Activated naive CD4-positive, alpha-beta T cell treated with anti-CD3 and anti-CD28 coated beads, Interleukin-2, amount 10 ng/mL, durations not matched to agents 7 days and 5 days (primary cell): ENCODE measurements at regions of chr17 and their contacts with region 1.

Region 1: DNA sequence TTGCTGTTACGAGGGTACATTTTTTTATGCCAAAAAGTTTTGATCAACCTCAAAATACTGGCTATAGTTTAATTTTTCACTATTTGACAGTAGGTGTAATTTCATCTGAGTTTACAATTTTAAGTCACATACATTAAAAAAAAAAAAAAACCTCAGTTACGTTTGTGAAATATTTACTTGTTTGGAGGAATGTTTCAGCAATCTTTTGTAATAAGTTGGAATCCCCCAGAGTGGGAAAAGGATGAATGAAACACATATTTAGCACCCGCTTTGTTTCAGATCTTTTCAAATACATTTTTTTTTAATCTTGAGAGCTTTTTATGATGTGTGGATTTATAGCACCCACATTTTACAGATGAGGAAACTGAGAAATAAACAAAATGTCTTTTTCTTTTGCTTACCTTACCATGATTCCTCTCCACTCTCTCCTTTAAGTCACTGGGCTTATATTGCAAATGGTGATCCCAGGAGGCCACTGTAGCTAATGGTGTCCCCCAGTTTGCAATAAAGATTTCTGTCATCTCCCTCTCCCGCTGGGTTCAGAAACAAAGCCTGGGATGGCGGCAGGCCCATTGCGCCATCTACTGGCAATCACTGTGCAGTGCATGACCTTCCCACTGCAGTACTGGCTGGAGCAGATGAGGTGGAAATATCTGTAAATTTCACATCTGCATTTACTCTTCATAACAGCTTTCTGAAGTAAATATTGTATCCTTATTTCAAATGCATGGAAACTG is 27.7 kb downstream of the TBC1D3B start:
- DNase-seq: peak; percentile 78
- H3K4me3 Mint-ChIP-seq: no peak overlapping the region
- H3K27ac Mint-ChIP-seq: no peak overlapping the region
- H3K4me1 Mint-ChIP-seq: no peaks in the 10 kb centered on the region
- H3K27me3 Mint-ChIP-seq: peaks cover 47% of the 10 kb centered on the region

Region 2: GRCh38 chr17:35969558-35970380 is 179.0 kb before region 1 on chr17:
- CTCF ChIA-PET with region 1: interaction called, 129 read pairs
- DNase-seq: peak; percentile 82
- H3K4me3 Mint-ChIP-seq: no peak overlapping the region
- H3K27ac Mint-ChIP-seq: no peak overlapping the region
- H3K4me1 Mint-ChIP-seq: no peaks in the 10 kb centered on the region
- H3K27me3 Mint-ChIP-seq: peaks cover 23% of the 10 kb centered on the region

Region 3: GRCh38 chr17:35981908-35982330 is 166.8 kb before region 1 on chr17:
- CTCF ChIA-PET with region 1: interaction called, 129 read pairs
- DNase-seq: no peak
- H3K4me3 Mint-ChIP-seq: no peak overlapping the region
- H3K27ac Mint-ChIP-seq: no peak overlapping the region
- H3K4me1 Mint-ChIP-seq: no peaks in the 10 kb centered on the region
- H3K27me3 Mint-ChIP-seq: peaks cover 25% of the 10 kb centered on the region

Region 4: DNA sequence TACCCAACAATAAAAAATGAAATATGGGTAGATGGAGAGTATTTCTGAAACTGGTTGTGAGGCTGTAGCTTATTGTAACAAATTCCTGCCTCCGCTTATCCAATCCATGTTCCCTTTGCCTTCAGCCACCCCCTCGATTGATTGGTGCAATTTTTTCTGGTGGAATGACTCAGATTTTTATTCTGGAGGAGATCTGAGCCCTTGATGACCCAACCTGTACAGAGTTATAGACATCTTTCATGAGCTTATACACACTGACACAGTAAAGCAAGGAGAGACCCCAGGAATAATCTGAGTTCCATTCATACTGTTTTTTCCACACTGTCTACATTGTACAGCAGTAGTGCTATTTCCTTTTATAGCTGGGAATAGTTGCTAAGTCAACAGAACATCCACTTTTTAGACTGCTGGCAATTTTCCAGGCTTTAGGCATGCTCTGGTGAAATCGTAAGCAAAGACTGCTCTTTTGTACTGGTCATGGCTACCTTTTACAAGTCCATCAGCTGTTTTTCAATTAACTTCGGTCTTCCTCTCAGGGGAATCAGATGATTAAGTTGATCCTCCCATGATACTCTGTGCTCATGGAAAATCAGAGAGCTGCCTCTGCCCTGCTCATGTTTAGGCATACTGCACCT is 15.0 kb before region 1 on chr17:
- CTCF ChIA-PET with region 1: interaction called, 15 read pairs
- DNase-seq: no peak
- H3K4me3 Mint-ChIP-seq: no peak overlapping the region
- H3K27ac Mint-ChIP-seq: no peak overlapping the region
- H3K4me1 Mint-ChIP-seq: no peaks in the 10 kb centered on the region
- H3K27me3 Mint-ChIP-seq: peaks cover 19% of the 10 kb centered on the region

Region 5: GRCh38 chr17:36198831-36199465 is 50.2 kb after region 1 on chr17:
- CTCF ChIA-PET with region 1: no interaction called
- DNase-seq: no peak
- H3K4me3 Mint-ChIP-seq: no peak overlapping the region
- H3K27ac Mint-ChIP-seq: no peak overlapping the region
- H3K4me1 Mint-ChIP-seq: peaks cover 4% of the 10 kb centered on the region
- H3K27me3 Mint-ChIP-seq: peaks cover 58% of the 10 kb centered on the region